B cell (primary cell): ENCODE measurements at regions of chr5 and their contacts with region 1.

Region 1: GRCh38 chr5:122704243-122705036 is 70.4 kb upstream of the SNX2 start:
- DNase-seq: peak; percentile 56
- ATAC-seq: no peak
- H3K4me3 ChIP-seq: no peak overlapping the region
- H3K4me3 Mint-ChIP-seq: peak overlapping the region; percentile 2
- H3K27ac ChIP-seq: peak overlapping the region; percentile 96
- H3K27ac Mint-ChIP-seq: peak overlapping the region; percentile 98
- H3K4me1 ChIP-seq: peaks cover 52 to 54% of the 10 kb centered on the region in 2 donors
- H3K4me1 Mint-ChIP-seq: peaks cover 59% of the 10 kb centered on the region
- H3K27me3 ChIP-seq: no peaks in the 10 kb centered on the region
- H3K27me3 Mint-ChIP-seq: no peaks in the 10 kb centered on the region
- CTCF ChIP-seq: peak; percentile 74

Region 2: DNA sequence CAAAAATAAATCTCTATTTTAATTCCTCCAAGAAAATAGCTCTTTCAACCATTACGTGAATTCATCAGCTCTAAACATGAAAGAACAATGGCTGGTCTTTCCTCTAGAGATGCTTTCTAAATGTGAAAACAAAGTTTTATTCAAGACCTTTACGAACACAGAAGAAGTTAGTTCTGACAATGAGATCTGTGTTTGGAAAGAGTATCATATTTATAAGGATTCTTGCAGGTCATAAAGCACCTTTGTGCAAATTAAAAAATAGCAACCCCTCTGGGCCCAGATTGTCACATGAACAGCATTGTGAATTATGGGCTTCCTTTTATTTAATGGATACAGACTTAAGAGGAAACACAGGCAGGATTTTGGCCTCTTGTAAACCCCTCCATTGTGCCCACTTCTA is 870.4 kb before region 1 on chr5:
- CTCF ChIA-PET with region 1: no interaction called
- POLR2A ChIA-PET with region 1: no interaction called
- intact Hi-C with region 1: no loop called
- DNase-seq: no peak
- ATAC-seq: no peak
- H3K4me3 ChIP-seq: no peak overlapping the region
- H3K4me3 Mint-ChIP-seq: no peak overlapping the region
- H3K27ac ChIP-seq: no peak overlapping the region
- H3K27ac Mint-ChIP-seq: no peak overlapping the region
- H3K4me1 ChIP-seq: no peaks in the 10 kb centered on the region
- H3K4me1 Mint-ChIP-seq: no peaks in the 10 kb centered on the region
- H3K27me3 ChIP-seq: no peaks in the 10 kb centered on the region
- H3K27me3 Mint-ChIP-seq: no peaks in the 10 kb centered on the region
- CTCF ChIP-seq: no peak

Region 3: GRCh38 chr5:122515709-122516431 is 188.6 kb before region 1 on chr5:
- CTCF ChIA-PET with region 1: interaction called, 13 read pairs
- POLR2A ChIA-PET with region 1: no interaction called
- intact Hi-C with region 1: no loop called
- DNase-seq: peak; percentile 77
- ATAC-seq: peak; percentile 73
- H3K4me3 ChIP-seq: no peak overlapping the region
- H3K4me3 Mint-ChIP-seq: no peak overlapping the region
- H3K27ac ChIP-seq: no peak overlapping the region
- H3K27ac Mint-ChIP-seq: no peak overlapping the region
- H3K4me1 ChIP-seq: peaks cover 0 to 3% of the 10 kb centered on the region in 2 donors
- H3K4me1 Mint-ChIP-seq: peaks cover 4% of the 10 kb centered on the region
- H3K27me3 ChIP-seq: peaks cover 0 to 4% (median 0%) of the 10 kb centered on the region in 4 experiments
- H3K27me3 Mint-ChIP-seq: peaks cover 4% of the 10 kb centered on the region
- CTCF ChIP-seq: peak; percentile 89

Region 4: GRCh38 chr5:122576256-122577016 is 128.0 kb before region 1 on chr5:
- CTCF ChIA-PET with region 1: no interaction called
- POLR2A ChIA-PET with region 1: no interaction called
- intact Hi-C with region 1: no loop called
- DNase-seq: no peak
- ATAC-seq: no peak
- H3K4me3 ChIP-seq: no peak overlapping the region
- H3K4me3 Mint-ChIP-seq: no peak overlapping the region
- H3K27ac ChIP-seq: no peak overlapping the region
- H3K27ac Mint-ChIP-seq: no peak overlapping the region
- H3K4me1 ChIP-seq: no peaks in the 10 kb centered on the region
- H3K4me1 Mint-ChIP-seq: peaks cover 3% of the 10 kb centered on the region
- H3K27me3 ChIP-seq: no peaks in the 10 kb centered on the region
- H3K27me3 Mint-ChIP-seq: peaks cover 5% of the 10 kb centered on the region
- CTCF ChIP-seq: no peak

Region 5: GRCh38 chr5:122723606-122724352 is 19.3 kb after region 1 on chr5:
- CTCF ChIA-PET with region 1: interaction called, 11 read pairs
- POLR2A ChIA-PET with region 1: no interaction called
- intact Hi-C with region 1: loop called (anchors 2 kb)
- DNase-seq: peak; percentile 58
- ATAC-seq: peak; percentile 88
- H3K4me3 ChIP-seq: peak overlapping the region in 4 of 5 experiments; percentile 18 to 39 (median 36)
- H3K4me3 Mint-ChIP-seq: peak overlapping the region; percentile 73
- H3K27ac ChIP-seq: peak overlapping the region; percentile 81 to 82
- H3K27ac Mint-ChIP-seq: peak overlapping the region; percentile 85
- H3K4me1 ChIP-seq: peaks cover 23 to 27% of the 10 kb centered on the region in 2 donors
- H3K4me1 Mint-ChIP-seq: peaks cover 43% of the 10 kb centered on the region
- H3K27me3 ChIP-seq: no peaks in the 10 kb centered on the region
- H3K27me3 Mint-ChIP-seq: no peaks in the 10 kb centered on the region
- CTCF ChIP-seq: no peak

Region 6: DNA sequence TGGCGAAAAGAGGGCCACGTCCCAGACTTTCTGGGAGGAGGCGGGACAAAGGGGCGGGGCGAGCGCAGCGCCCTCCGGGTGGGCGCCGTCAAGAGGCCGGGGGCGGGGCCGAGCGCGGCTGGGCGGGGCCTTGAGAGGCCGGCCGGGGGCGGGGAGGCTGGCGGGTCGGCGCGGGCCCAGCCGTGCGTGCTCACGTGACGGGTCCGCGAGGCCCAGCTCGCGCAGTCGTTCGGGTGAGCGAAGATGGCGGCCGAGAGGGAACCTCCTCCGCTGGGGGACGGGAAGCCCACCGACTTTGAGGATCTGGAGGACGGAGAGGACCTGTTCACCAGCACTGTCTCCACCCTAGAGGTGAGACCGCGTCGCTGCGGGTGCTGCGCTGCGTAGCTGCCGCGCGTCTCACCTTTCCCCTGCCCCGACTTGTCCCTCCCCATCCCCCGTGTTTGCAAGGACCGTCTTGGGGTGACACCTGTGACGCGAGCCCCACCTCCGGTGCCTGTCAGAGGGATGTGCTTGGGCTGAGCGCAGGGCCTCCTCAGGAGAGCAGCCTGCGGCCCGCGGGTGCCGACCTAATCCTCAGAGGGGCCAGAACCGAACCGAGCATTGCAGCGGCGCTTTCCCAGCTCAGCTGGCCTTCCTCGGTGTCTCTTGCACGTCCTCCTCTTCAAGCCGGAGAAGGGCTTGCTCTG is 70.6 kb after region 1 on chr5 and contains the start of gene SNX2:
- CTCF ChIA-PET with region 1: interaction called, 54 read pairs
- POLR2A ChIA-PET with region 1: interaction called, 11 read pairs
- intact Hi-C with region 1: loop called (anchors 1 kb)
- DNase-seq: peak; percentile 96
- ATAC-seq: peak; percentile 88
- H3K4me3 ChIP-seq: peak within 1 kb of the TSS; percentile 95 to 100 (median 99)
- H3K4me3 Mint-ChIP-seq: peak within 1 kb of the TSS; percentile 89
- H3K27ac ChIP-seq: peak within 1 kb of the TSS; percentile 100
- H3K27ac Mint-ChIP-seq: peak within 1 kb of the TSS; percentile 86
- H3K4me1 ChIP-seq: peaks cover 23 to 26% of the 10 kb centered on the region in 2 donors
- H3K4me1 Mint-ChIP-seq: peaks cover 35% of the 10 kb centered on the region
- H3K27me3 ChIP-seq: no peaks in the 10 kb centered on the region
- H3K27me3 Mint-ChIP-seq: no peaks in the 10 kb centered on the region
- CTCF ChIP-seq: peak; percentile 58
- total RNA-seq, gene SNX2: 266 and 270 TPM in 2 replicates

Region 7: DNA sequence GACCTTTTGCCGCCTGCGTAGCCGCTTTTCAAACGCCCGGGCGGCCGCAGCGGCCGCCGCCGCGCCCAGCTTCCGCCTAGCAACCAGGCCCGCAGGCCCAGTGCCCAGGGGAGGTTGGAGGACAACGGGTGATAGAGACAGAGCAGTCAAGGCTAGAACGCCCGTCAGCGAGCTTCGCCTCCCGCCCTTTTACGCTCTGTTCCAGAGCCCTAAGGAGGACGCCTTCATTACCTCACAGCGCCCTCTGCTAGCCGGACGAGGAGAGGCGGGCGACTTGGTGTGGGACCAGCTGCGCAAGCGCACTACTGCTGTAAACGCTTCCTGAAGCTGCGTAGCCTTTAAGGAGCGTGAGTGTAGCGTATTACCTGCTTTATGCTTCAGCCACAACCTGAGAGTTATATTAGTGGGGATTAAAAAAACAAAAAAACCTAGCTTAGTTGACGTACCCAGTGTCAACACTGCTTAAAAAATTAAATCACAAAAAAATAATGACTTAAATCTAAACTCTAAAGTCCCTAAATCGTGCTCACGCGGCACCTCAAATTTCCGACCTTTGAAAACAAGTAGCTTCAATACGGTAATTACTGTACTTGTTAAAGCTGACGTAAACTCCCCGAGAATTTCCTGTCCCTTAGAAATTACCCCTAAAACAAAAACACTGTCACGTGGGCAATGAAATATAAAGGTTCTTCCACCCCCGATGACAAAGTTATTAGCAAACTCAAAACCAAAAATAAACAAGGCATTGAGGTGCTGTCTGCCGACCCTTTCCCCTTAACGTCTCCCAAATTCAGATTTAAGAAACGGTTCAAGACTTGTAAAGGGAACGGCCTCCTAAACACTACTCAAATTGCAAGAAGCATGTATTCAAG is 719.1 kb after region 1 on chr5 and contains the start of gene CEP120:
- CTCF ChIA-PET with region 1: no interaction called
- POLR2A ChIA-PET with region 1: no interaction called
- intact Hi-C with region 1: loop called (anchors 5 kb)
- DNase-seq: peak; percentile 99
- ATAC-seq: peak; percentile 97
- H3K4me3 ChIP-seq: peak within 1 kb of the TSS; percentile 51 to 90 (median 89)
- H3K4me3 Mint-ChIP-seq: no peak within 1 kb of the TSS
- H3K27ac ChIP-seq: peak within 1 kb of the TSS; percentile 96 to 99
- H3K27ac Mint-ChIP-seq: no peak within 1 kb of the TSS
- H3K4me1 ChIP-seq: peaks cover 32 to 34% of the 10 kb centered on the region in 2 donors
- H3K4me1 Mint-ChIP-seq: peaks cover 22% of the 10 kb centered on the region
- H3K27me3 ChIP-seq: no peaks in the 10 kb centered on the region
- H3K27me3 Mint-ChIP-seq: no peaks in the 10 kb centered on the region
- CTCF ChIP-seq: peak; percentile 87
- total RNA-seq, gene CEP120: 89.7 and 97.9 TPM in 2 replicates

Region 8: DNA sequence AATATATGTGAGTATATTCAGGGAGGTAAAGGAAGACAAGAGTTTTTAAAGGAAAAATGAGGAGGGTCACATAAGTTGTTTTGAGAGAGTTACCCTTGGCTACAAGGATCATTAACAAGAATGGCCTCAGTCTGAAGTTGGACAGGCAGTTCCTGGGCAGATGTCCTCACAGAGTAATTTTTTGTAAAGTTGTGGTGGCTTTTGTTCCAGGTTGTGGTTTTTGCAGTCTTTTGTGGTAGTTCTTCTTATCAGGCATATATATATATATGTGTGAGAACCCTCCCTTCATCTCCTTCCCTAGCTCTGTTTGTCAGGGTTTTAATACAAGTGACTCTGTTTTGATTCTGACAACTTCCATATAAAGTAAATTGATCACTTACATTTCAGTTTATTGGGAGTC is 867.5 kb after region 1 on chr5:
- CTCF ChIA-PET with region 1: no interaction called
- POLR2A ChIA-PET with region 1: no interaction called
- intact Hi-C with region 1: no loop called
- DNase-seq: no peak
- ATAC-seq: no peak
- H3K4me3 ChIP-seq: no peak overlapping the region
- H3K4me3 Mint-ChIP-seq: no peak overlapping the region
- H3K27ac ChIP-seq: no peak overlapping the region
- H3K27ac Mint-ChIP-seq: peak overlapping the region; percentile 1
- H3K4me1 ChIP-seq: peaks cover 0 to 3% of the 10 kb centered on the region in 2 donors
- H3K4me1 Mint-ChIP-seq: peaks cover 29% of the 10 kb centered on the region
- H3K27me3 ChIP-seq: no peaks in the 10 kb centered on the region
- H3K27me3 Mint-ChIP-seq: no peaks in the 10 kb centered on the region
- CTCF ChIP-seq: no peak

Region 9: GRCh38 chr5:123907349-123907748 is 1202.9 kb after region 1 on chr5:
- CTCF ChIA-PET with region 1: no interaction called
- POLR2A ChIA-PET with region 1: no interaction called
- intact Hi-C with region 1: no loop called
- DNase-seq: peak; percentile 21
- ATAC-seq: no peak
- H3K4me3 ChIP-seq: no peak overlapping the region
- H3K4me3 Mint-ChIP-seq: peak overlapping the region; percentile 56
- H3K27ac ChIP-seq: no peak overlapping the region
- H3K27ac Mint-ChIP-seq: no peak overlapping the region
- H3K4me1 ChIP-seq: peaks cover 8 to 16% of the 10 kb centered on the region in 2 donors
- H3K4me1 Mint-ChIP-seq: peaks cover 21% of the 10 kb centered on the region
- H3K27me3 ChIP-seq: no peaks in the 10 kb centered on the region
- H3K27me3 Mint-ChIP-seq: no peaks in the 10 kb centered on the region
- CTCF ChIP-seq: no peak